Naive thymus-derived CD4-positive, alpha-beta T cell (primary cell): ENCODE measurements at regions of chr10 and their contacts with region 1.

Region 1: GRCh38 chr10:124092860-124093773 is at the start of gene CHST15:
- DNase-seq: peak in 4 of 9 donors; percentile 12 to 39 (median 17)
- ATAC-seq: peak; percentile 19
- H3K4me3 ChIP-seq: no peak within 1 kb of the TSS
- H3K4me3 Mint-ChIP-seq: peak within 1 kb of the TSS in 8 of 10 donors; percentile 41 to 84 (median 71)
- H3K27ac ChIP-seq: no peak within 1 kb of the TSS
- H3K27ac Mint-ChIP-seq: no peak within 1 kb of the TSS
- H3K4me1 ChIP-seq: no peaks in the 10 kb centered on the region
- H3K4me1 Mint-ChIP-seq: peaks cover 0 to 10% (median 5%) of the 10 kb centered on the region in 7 donors
- H3K27me3 ChIP-seq: no peaks in the 10 kb centered on the region
- H3K27me3 Mint-ChIP-seq: peaks cover 23 to 71% (median 46%) of the 10 kb centered on the region in 5 donors
- total RNA-seq, gene CHST15: 0.41 to 43.3 (median 2.4) TPM

Region 2: DNA sequence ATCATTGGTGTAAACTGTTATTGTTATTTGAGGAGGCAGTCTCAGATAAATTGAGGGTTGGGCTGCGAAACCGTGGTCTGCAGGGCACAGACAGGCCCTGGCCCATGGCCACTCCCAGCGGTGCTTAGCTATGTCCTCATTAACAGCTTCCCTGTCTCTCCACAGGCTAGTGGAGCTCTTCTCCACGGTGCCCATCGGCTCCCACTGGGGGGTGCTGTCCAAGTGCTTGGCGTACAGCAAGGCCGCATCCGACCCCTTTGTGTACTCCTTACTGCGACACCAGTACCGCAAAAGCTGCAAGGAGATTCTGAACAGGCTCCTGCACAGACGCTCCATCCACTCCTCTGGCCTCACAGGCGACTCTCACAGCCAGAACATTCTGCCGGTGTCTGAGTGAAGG is 405.4 kb before region 1 on chr10:
- CTCF ChIA-PET with region 1: no interaction called
- POLR2A ChIA-PET with region 1: no interaction called
- intact Hi-C with region 1: no loop called
- DNase-seq: no peak
- ATAC-seq: no peak
- H3K4me3 ChIP-seq: no peak overlapping the region
- H3K4me3 Mint-ChIP-seq: no peak overlapping the region
- H3K27ac ChIP-seq: no peak overlapping the region
- H3K27ac Mint-ChIP-seq: no peak overlapping the region
- H3K4me1 ChIP-seq: no peaks in the 10 kb centered on the region
- H3K4me1 Mint-ChIP-seq: no peaks in the 10 kb centered on the region
- H3K27me3 ChIP-seq: no peaks in the 10 kb centered on the region
- H3K27me3 Mint-ChIP-seq: peaks cover 0 to 18% (median 11%) of the 10 kb centered on the region in 5 donors

Region 3: GRCh38 chr10:124025660-124026588 is 67.2 kb before region 1 on chr10:
- CTCF ChIA-PET with region 1: no interaction called
- POLR2A ChIA-PET with region 1: no interaction called
- intact Hi-C with region 1: loop called in 1 of 2 experiments (anchors 2 kb)
- DNase-seq: peak in 1 of 9 donors; percentile 8
- ATAC-seq: peak; percentile 48
- H3K4me3 ChIP-seq: no peak overlapping the region
- H3K4me3 Mint-ChIP-seq: peak overlapping the region in 1 of 10 donors; percentile 4
- H3K27ac ChIP-seq: no peak overlapping the region
- H3K27ac Mint-ChIP-seq: no peak overlapping the region
- H3K4me1 ChIP-seq: no peaks in the 10 kb centered on the region
- H3K4me1 Mint-ChIP-seq: peaks cover 0 to 14% (median 8%) of the 10 kb centered on the region in 7 donors
- H3K27me3 ChIP-seq: no peaks in the 10 kb centered on the region
- H3K27me3 Mint-ChIP-seq: peaks cover 0 to 4% (median 3%) of the 10 kb centered on the region in 5 donors